ENCODE measurements at regions of chr15 and their contacts with region 1.

Region 1: GRCh38 chr15:64566629-64567427 is 106.5 kb downstream of the ZNF609 start:
- DNase-seq: no peak
- H3K4me3 ChIP-seq: no peak overlapping the region
- H3K27ac ChIP-seq: no peak overlapping the region
- H3K4me1 ChIP-seq: no peaks in the 10 kb centered on the region
- H3K27me3 ChIP-seq: no peaks in the 10 kb centered on the region
- CTCF ChIP-seq: no peak
- EP300 ChIP-seq: no peak
- POLR2A ChIP-seq: no peak

Region 2: GRCh38 chr15:63933522-63933921 is 633.3 kb before region 1 on chr15:
- intact Hi-C with region 1: no loop called
- DNase-seq: peak in 1 of 5 donors; percentile 1
- H3K4me3 ChIP-seq: no peak overlapping the region
- H3K27ac ChIP-seq: no peak overlapping the region
- H3K4me1 ChIP-seq: no peaks in the 10 kb centered on the region
- H3K27me3 ChIP-seq: no peaks in the 10 kb centered on the region
- CTCF ChIP-seq: no peak
- EP300 ChIP-seq: no peak
- POLR2A ChIP-seq: no peak

Region 3: DNA sequence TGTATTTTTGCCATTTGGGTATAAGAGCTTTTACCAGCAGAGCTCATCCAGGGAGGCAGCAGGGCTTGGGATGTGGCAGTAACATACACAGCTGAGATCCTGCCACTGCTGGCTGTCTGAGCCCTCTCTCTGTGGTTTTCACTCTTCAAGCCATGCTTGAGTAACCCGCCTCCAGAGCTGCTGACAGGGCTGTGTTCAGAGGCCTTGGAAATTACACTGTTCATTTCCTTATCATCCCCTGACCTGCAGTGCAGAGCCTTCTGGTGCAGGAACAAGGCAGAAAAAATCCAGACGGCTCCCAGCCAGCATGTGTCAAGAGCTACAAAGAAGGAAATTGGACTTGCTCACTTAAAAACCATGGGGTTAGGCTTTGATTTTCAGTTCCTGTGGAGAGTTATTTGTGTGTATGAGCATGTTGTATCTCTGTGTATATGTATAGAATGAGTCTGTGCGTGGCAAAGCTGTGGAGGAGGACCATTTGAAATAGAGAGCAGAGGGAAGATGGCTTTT is 59.5 kb before region 1 on chr15:
- intact Hi-C with region 1: loop called in 1 of 4 experiments (anchors 2 kb)
- DNase-seq: peak; percentile 80 to 84 (median 83)
- H3K4me3 ChIP-seq: no peak overlapping the region
- H3K27ac ChIP-seq: peak overlapping the region in 1 of 2 donors; percentile 48
- H3K4me1 ChIP-seq: peaks cover 24% of the 10 kb centered on the region
- H3K27me3 ChIP-seq: no peaks in the 10 kb centered on the region
- CTCF ChIP-seq: no peak
- EP300 ChIP-seq: no peak
- POLR2A ChIP-seq: no peak